ENCODE measurements at regions of chr4 and their contacts with region 1.

Region 1: DNA sequence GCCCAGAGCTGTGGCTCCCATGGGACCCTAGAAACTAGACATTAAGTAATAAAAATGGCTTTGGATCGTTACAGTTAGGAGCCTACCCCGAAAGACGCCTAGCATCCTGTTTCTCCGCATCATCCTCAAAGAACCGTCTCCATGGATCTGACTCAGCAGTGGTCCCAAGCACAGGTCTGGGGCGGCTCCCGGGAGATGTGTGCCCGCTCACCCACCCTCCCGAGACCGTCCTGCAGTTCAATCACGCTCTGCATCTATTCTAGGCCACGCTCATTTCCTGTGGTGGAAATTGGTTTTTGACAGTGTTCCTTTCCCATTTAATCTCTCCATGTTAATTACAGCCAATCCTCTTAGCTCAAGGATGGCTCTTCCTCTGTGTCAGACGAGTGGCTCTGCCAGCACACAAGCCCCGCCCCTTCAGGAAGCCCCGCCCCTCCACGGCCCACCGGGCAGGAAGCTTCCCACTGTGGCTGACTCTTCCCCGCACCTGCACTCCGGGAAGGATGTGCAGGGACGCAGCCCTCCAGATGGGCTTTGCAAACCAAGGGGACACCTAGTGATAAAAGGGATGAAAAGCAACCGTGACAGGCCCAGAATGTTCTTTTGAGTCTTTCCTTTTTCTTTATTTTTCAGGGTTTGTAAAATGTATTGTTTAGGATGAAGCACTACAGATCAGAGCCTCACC is 34.5 kb upstream of the HELT start:
- DNase-seq: peak in 3 of 4 donors; percentile 24 to 85 (median 51)
- ATAC-seq: peak; percentile 82
- H3K4me3 ChIP-seq: no peak overlapping the region
- H3K27ac ChIP-seq: no peak overlapping the region
- H3K4me1 ChIP-seq: peaks cover 0 to 10% of the 10 kb centered on the region in 2 donors
- H3K27me3 ChIP-seq: peaks cover 0 to 7% of the 10 kb centered on the region in 2 donors
- CTCF ChIP-seq: peak; percentile 7 to 30

Region 2: GRCh38 chr4:184755278-184755677 is 228.5 kb before region 1 on chr4:
- intact Hi-C with region 1: loop called in 1 of 2 experiments (anchors 10 kb)
- DNase-seq: no peak
- ATAC-seq: peak; percentile 22
- H3K4me3 ChIP-seq: no peak overlapping the region
- H3K27ac ChIP-seq: no peak overlapping the region
- H3K4me1 ChIP-seq: no peaks in the 10 kb centered on the region
- H3K27me3 ChIP-seq: no peaks in the 10 kb centered on the region
- CTCF ChIP-seq: no peak

Region 3: DNA sequence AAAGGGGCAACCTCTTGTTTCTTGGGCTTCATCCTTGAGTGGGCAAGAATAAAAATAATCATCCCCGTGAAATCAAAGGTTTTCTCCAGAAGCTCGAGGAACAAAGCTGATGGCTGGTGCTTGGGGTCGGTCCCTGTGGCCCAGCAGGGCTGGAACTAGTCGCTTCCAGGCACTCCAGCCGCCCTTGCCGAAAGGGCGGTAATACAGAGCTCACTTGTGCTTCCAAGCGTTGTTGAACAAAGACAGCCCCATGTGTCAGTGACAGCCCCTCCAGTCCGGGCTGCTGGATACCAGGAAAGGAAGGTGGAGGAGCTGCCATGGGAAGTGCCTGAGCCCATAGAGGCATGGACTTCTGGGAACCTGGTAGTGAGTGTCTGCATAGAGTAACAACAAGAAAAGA is 39.7 kb after region 1 on chr4:
- intact Hi-C with region 1: no loop called
- DNase-seq: no peak
- ATAC-seq: no peak
- H3K4me3 ChIP-seq: no peak overlapping the region
- H3K27ac ChIP-seq: no peak overlapping the region
- H3K4me1 ChIP-seq: peaks cover 0 to 27% of the 10 kb centered on the region in 2 donors
- H3K27me3 ChIP-seq: peaks cover 43 to 95% of the 10 kb centered on the region in 2 donors
- CTCF ChIP-seq: no peak

Region 4: DNA sequence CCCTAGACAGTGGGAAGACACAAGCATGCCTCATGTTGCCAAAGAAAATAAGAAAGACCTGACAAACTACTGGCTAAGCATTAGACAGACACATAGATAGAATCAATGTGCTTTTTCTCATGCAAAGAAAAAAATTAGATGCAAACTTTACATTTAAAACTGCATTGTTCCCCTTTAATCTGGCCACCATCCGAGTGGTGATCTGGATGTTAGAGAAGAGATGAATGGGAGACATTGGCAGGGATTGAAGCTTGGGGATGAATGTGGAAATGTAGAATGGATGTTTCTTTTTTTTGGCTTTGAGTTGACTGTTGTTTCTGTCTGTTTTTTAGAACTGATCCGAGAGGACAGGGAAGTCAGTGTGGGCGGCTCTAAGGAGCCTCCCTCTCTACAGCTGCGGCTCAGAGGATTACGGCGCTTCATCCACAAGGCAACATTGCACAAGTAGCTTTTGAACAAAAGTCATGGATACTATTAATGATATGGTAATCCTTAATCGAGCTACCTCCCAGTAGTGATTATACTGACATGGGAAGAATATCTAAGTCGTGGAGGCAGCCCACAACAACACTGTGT is 87.5 kb after region 1 on chr4:
- intact Hi-C with region 1: no loop called
- DNase-seq: no peak
- ATAC-seq: no peak
- H3K4me3 ChIP-seq: no peak overlapping the region
- H3K27ac ChIP-seq: no peak overlapping the region
- H3K4me1 ChIP-seq: no peaks in the 10 kb centered on the region
- H3K27me3 ChIP-seq: peaks cover 0 to 8% of the 10 kb centered on the region in 2 donors
- CTCF ChIP-seq: no peak

Measured in left lung (tissue), 14 donors.